ENCODE measurements at regions of chr2 and their contacts with region 1.

Region 1: GRCh38 chr2:174465327-174465726 is 21.5 kb downstream of the GPR155 start:
- DNase-seq: no peak
- H3K4me3 ChIP-seq: no peak overlapping the region
- H3K27ac ChIP-seq: no peak overlapping the region
- H3K4me1 ChIP-seq: no peaks in the 10 kb centered on the region
- H3K27me3 ChIP-seq: no peaks in the 10 kb centered on the region
- CTCF ChIP-seq: no peak
- POLR2A ChIP-seq: no peak

Region 2: GRCh38 chr2:174487108-174487819 is 21.9 kb after region 1 on chr2:
- CTCF ChIA-PET with region 1: interaction called, 18 read pairs
- POLR2A ChIA-PET with region 1: no interaction called
- dilution Hi-C with region 1: no loop called
- intact Hi-C with region 1: no loop called
- DNase-seq: peak; percentile 98
- H3K4me3 ChIP-seq: peak overlapping the region; percentile 64 to 94 (median 84)
- H3K27ac ChIP-seq: peak overlapping the region; percentile 81
- H3K4me1 ChIP-seq: peaks cover 10% of the 10 kb centered on the region
- H3K27me3 ChIP-seq: peaks cover 1 to 4% of the 10 kb centered on the region in 2 experiments
- CTCF ChIP-seq: no peak
- POLR2A ChIP-seq: peak; percentile 86

Region 3: DNA sequence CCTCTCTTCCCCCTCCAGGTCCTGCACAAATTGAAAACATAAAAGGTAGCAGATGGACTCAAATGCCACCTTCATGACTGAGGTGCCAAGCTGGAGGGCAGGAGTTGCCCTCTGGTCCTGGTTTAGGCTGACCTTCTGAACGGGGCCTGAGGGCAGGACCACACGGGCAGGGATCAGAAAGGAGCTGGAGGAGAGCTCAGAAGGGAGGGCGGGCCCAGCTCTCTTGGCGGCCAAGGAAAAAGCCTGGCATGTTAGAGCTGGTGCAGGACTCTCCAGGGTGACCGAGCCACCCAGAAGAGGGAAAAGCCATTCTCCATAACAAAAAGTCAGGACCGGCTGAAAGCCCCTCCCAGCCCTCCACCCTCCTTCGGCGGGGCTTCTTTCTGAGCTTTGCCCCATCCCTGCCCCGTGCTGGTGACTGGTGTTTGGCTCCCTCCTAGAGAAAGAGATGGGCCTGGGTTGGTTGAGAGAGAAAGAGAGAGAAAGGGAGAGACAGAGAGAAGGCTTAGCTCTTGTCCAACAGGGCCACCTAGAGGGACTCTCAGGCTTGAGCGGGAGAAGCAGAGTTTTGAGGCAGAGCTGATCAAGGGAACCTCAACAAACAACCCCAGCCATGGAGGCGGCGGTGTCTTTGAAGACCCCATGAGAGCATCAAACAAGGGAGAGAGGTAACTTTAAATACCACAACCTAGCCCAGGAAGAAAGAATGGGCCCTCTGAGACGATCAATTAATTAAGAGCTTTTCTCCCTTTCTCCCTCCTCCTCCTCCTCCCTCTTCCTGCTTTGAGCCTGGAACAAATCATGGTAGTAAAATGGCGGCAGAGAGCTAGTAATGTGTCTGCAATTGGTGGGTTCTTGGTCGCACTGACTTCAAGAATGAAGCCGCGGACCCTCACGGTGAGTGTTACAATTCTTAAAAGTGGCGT is 81.5 kb after region 1 on chr2:
- CTCF ChIA-PET with region 1: interaction called, 212 read pairs
- POLR2A ChIA-PET with region 1: no interaction called
- dilution Hi-C with region 1: no loop called
- intact Hi-C with region 1: loop called (anchors 1 kb)
- DNase-seq: peak; percentile 17
- H3K4me3 ChIP-seq: no peak overlapping the region
- H3K27ac ChIP-seq: no peak overlapping the region
- H3K4me1 ChIP-seq: no peaks in the 10 kb centered on the region
- H3K27me3 ChIP-seq: peaks cover 2 to 15% of the 10 kb centered on the region in 2 experiments
- CTCF ChIP-seq: peak; percentile 19 to 36
- POLR2A ChIP-seq: no peak

Region 4: DNA sequence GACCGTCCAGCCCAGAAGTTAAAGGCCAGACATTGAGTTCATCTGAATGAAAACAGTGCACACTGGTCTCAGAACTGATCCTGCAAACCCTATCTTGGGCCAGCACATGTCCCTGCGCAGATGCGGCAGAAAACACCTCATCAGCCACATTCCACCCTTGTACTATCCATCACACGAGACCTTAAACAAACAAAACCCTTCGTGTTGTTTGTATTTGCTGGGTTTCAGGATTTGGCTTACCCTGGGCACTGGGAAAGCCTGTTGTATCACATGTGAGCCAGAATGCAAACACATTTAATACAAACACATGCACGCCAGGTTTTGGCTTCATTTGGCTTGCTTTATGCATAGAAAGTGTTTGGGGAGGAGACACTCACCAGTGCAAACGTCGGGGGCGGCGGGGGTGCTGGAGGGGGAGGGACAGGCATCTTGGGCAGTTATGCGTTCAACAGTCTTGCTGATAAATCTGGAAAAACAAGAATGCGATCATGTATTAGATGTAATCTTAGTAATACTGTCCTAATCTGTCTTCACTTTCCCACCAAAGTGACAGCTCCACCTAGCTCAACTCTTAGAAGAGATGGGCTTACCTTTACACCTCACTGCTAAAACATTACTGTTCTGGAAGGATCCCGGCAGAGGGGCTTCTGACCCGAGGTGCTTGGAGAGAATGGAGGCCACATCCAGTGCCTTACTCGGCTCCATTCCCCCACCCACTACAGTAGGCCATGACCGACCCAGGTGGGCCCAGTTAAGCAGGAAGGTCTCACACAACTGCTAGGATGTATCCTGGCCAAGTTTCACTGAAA is 120.0 kb after region 1 on chr2:
- CTCF ChIA-PET with region 1: no interaction called
- POLR2A ChIA-PET with region 1: no interaction called
- dilution Hi-C with region 1: no loop called
- intact Hi-C with region 1: no loop called
- DNase-seq: no peak
- H3K4me3 ChIP-seq: no peak overlapping the region
- H3K27ac ChIP-seq: no peak overlapping the region
- H3K4me1 ChIP-seq: no peaks in the 10 kb centered on the region
- H3K27me3 ChIP-seq: no peaks in the 10 kb centered on the region
- CTCF ChIP-seq: no peak
- POLR2A ChIP-seq: no peak

Region 5: DNA sequence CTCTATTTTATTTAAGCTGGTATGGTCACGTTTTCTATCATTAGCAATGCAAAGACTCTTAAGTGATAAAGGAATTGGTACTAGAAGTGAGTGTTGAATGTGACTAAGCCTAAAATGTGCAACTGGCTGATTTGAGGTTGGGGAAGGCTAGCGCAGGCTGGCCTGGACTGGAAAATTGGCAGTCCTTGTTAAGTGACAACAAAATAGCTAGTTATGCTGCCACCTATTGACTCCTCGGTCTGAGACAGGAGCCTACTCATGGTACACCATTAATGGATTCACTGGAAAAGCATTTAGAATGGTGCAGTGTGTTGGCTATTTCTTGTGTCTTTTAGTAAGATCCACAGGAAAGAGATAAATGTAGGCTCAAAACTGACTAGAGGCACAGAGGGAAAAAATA is 138.0 kb after region 1 on chr2:
- CTCF ChIA-PET with region 1: interaction called, 40 read pairs
- POLR2A ChIA-PET with region 1: no interaction called
- dilution Hi-C with region 1: no loop called
- intact Hi-C with region 1: loop called (anchors 1 kb)
- DNase-seq: peak; percentile 62
- H3K4me3 ChIP-seq: no peak overlapping the region
- H3K27ac ChIP-seq: no peak overlapping the region
- H3K4me1 ChIP-seq: peaks cover under 1% of the 10 kb centered on the region
- H3K27me3 ChIP-seq: no peaks in the 10 kb centered on the region
- CTCF ChIP-seq: peak; percentile 48 to 56
- POLR2A ChIP-seq: no peak

Region 6: GRCh38 chr2:174688079-174688478 is 222.8 kb after region 1 on chr2:
- CTCF ChIA-PET with region 1: interaction called, 231 read pairs
- POLR2A ChIA-PET with region 1: no interaction called
- dilution Hi-C with region 1: no loop called
- intact Hi-C with region 1: loop called (anchors 1 kb)
- DNase-seq: peak; percentile 53
- H3K4me3 ChIP-seq: no peak overlapping the region
- H3K27ac ChIP-seq: no peak overlapping the region
- H3K4me1 ChIP-seq: peaks cover 8% of the 10 kb centered on the region
- H3K27me3 ChIP-seq: peaks cover 3 to 10% of the 10 kb centered on the region in 2 experiments
- CTCF ChIP-seq: peak in 1 of 2 donors; percentile 15
- POLR2A ChIP-seq: no peak

Region 7: DNA sequence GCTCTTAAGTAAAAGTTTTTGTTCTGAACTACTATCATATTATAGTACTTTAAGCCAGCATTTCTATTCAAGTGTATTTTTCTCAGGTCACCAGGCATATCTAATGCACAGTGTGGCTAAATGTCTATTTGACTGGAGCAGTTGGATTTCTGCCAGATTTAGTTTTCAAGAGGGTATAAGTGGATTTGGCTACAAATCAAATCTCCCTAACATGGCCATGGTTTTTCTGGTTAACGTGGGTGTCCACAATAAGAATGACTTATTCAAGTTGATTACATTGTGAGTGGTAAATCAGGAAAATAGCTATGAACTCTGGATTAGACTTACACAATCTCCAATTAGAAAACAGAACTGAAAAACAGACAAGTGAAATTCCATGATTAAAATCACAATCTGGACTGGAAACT is 545.5 kb after region 1 on chr2:
- CTCF ChIA-PET with region 1: no interaction called
- POLR2A ChIA-PET with region 1: no interaction called
- dilution Hi-C with region 1: no loop called
- intact Hi-C with region 1: no loop called
- DNase-seq: peak; percentile 59
- H3K4me3 ChIP-seq: no peak overlapping the region
- H3K27ac ChIP-seq: no peak overlapping the region
- H3K4me1 ChIP-seq: peaks cover 29% of the 10 kb centered on the region
- H3K27me3 ChIP-seq: peaks cover 0 to 3% of the 10 kb centered on the region in 2 experiments
- CTCF ChIP-seq: no peak
- POLR2A ChIP-seq: no peak